ENCODE measurements at regions of chr1 and their contacts with region 1.

Region 1: DNA sequence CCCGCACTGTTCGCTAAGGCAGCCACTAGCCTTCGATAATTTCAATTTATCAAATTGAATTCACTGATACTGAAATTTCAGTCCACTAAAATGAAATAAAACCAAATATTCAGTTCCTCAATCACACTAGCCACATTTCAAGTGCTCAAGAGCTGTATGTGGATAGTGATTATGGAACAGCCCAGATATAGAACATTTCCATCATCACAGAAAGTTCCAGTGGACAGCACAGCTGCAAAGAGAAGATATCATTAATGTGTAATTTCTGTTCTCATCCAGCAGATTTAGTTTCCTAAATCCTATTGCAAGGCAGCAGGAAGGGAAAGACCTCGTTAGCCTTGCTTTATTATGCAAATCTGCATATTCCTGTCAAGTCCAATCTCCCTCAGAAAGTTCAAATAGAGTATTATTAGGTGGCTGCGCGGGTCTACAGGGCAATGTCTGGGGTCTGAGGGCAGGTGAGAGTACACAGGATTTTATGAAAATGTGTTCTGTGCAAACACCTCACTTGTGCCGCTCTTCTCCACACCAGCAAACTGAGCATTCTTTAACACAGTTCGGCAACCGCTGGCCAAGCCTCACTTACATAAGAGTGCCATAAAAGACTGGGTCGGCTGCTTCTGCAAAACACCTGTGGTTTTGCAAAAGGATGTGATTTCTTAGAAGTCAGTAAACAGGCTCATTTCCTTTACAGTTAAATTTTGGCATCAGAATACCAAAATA is 22.4 kb downstream of the CAPZB start:
- DNase-seq: peak; percentile 64
- ATAC-seq: no peak
- H3K4me3 Mint-ChIP-seq: peak overlapping the region; percentile 9
- H3K27ac Mint-ChIP-seq: peak overlapping the region; percentile 86
- H3K4me1 Mint-ChIP-seq: peaks cover 89% of the 10 kb centered on the region
- H3K27me3 Mint-ChIP-seq: no peaks in the 10 kb centered on the region

Region 2: GRCh38 chr1:19439464-19440171 is 23.3 kb before region 1 on chr1:
- CTCF ChIA-PET with region 1: interaction called, 5 read pairs
- POLR2A ChIA-PET with region 1: interaction called, 5 read pairs
- intact Hi-C with region 1: loop called in 1 of 2 experiments (anchors 2 kb)
- DNase-seq: peak; percentile 60
- ATAC-seq: no peak
- H3K4me3 Mint-ChIP-seq: no peak overlapping the region
- H3K27ac Mint-ChIP-seq: peak overlapping the region; percentile 29
- H3K4me1 Mint-ChIP-seq: peaks cover 87% of the 10 kb centered on the region
- H3K27me3 Mint-ChIP-seq: no peaks in the 10 kb centered on the region

Region 3: DNA sequence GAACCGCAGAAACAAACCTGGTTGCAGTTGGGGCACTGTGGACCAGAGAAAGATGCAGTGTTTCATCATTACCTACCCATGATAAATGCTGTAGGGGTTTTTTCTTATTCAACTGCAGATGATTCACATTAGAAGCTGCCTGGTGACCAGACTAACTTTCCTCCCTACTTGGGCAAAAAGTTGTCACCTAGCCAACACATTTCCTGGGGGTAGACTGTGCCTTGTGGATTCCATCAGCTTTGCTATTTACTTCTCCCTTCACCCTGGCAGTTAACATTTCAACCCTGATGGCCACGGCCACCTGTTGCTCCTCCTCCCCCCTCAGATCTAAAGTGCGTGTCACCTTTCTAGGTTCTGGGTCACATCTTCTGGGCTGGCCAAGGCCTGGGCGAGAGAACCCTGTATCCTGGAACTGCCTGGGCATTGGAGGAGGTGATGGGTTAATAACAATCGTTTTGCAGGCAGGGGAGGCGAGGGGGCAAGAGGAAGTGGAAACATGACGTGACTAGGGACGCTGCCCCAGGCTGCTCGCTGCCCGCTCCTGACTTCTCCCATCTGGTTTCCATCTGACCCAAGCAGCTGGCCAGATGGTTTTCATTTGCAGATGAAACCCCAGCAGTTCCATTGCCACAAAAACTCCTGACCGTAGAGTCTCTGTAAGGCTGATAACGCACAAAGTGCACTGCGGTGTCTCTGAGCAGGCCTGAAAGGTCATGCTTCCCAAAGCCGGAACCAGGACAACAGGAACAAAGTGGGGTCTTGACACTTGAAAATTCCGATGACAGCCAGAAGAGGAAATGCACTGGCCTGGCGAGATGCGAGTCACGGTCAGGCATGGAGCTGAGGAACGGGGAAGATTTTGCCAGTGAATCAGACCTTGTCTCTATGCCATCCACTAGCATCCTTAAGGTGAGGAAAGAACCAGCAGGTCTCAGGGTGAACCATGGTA is 14.2 kb before region 1 on chr1:
- CTCF ChIA-PET with region 1: interaction called, 6 read pairs
- POLR2A ChIA-PET with region 1: interaction called, 3 read pairs
- intact Hi-C with region 1: loop called (anchors 1 kb)
- DNase-seq: peak; percentile 65
- ATAC-seq: peak; percentile 77
- H3K4me3 Mint-ChIP-seq: peak overlapping the region; percentile 6
- H3K27ac Mint-ChIP-seq: peak overlapping the region; percentile 92
- H3K4me1 Mint-ChIP-seq: peaks cover 91% of the 10 kb centered on the region
- H3K27me3 Mint-ChIP-seq: no peaks in the 10 kb centered on the region

Region 4: DNA sequence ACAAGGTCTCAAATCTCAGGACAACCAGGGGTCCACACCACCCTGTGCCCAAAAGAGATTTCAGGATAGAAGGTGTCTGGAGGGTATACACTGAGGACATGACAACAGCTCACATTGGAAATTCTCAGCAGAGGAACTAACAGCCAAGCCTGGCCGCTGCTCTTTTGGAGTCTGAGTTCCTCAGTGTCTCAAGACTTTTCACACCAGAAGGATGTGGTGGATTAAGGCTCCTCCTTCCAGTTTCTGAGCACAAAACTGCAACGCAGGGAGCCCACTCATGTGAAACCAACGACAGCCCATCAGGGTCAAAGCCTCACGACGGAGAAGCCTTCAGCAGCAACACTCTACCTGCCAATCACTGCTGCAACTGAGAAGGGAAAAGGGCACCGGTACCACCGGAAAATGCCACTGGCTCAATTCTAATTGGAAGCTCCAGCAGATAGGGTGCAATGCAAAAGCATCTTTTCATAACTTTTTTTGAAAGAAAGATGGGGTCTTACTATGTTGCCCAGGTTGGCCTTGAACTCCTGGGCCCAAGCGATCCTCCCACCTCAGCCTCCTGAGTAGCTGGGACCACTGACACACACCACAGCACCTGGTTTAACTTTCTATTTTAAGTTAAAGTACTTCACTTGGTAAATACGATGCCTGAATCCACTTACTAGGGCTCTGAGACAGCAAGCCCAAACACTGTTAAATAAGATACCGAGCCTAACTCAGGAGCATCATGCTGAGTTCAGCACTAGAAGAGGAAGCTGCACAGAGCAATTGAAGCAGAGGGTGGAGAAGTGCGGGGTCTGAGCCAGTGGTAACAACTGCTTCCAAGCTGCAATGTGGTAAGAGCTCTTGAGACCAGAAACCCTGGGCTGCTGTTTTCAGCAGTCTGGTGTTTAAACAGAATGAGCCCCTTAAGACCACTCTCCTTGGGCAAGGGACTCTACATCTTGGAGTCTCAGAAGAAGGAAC is 14.6 kb after region 1 on chr1:
- CTCF ChIA-PET with region 1: interaction called, 8 read pairs
- POLR2A ChIA-PET with region 1: interaction called, 3 read pairs
- intact Hi-C with region 1: loop called in 1 of 2 experiments (anchors 1 kb)
- DNase-seq: peak; percentile 60
- ATAC-seq: peak; percentile 62
- H3K4me3 Mint-ChIP-seq: peak overlapping the region; percentile 64
- H3K27ac Mint-ChIP-seq: peak overlapping the region; percentile 87
- H3K4me1 Mint-ChIP-seq: peaks cover 93% of the 10 kb centered on the region
- H3K27me3 Mint-ChIP-seq: no peaks in the 10 kb centered on the region

Measured in activated CD4-positive, alpha-beta T cell treated with anti-CD3 and anti-CD28 coated beads for 36 hours (primary cell).